ENCODE measurements at regions of chr5 and their contacts with region 1.

Region 1: DNA sequence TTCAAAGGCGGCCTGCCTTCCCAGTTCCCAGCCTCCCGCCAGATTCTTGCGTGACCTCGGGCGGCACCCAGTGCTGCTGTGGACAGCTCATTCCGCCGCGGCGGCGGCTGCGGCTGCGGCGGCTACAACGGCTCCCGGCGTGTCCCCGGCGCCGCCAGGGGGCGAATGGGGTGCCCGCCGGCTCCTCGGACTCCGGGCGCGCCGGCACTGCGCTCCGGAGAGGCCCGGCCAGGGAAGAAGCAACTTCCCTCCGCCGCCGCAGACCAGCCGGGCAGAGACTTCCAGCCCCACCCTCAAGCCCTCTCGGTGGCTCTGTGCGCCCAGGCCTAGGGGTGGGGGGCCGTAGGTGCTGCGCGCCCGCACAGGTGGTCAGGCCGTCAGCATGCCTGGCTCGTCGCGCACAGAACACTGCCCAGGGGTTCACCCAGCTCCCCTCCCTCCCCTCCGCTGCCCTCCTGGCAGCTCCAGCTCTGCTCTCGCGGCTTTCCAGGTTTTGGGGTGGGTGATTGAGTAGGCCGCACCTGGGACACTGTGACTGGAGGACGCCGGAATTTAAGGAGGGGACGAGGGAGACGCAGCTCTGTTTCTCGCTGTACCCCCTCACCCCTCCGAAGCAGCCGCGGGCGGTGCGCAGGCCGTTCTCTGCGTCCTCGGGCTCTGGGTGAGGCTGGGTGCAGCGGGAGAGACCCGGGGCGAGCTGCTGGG is 20.2 kb downstream of the IGIP start:
- DNase-seq: peak; percentile 51 to 68
- ATAC-seq: peak; percentile 89 to 92
- H3K4me3 ChIP-seq: peak overlapping the region; percentile 31
- H3K27ac ChIP-seq: peak overlapping the region in 1 of 2 experiments; percentile 48; a peak in 2 of 6 replicates
- H3K4me1 ChIP-seq: peaks cover 5% of the 10 kb centered on the region; the same call in 2 of the 3 replicates
- CTCF ChIP-seq: peak; percentile 52
- EP300 ChIP-seq: no peak
- POLR2A ChIP-seq: no peak
- RAD21 ChIP-seq: peak in 1 of 2 experiments; percentile 5; a peak in 2 of 5 replicates

Region 2: GRCh38 chr5:139774980-139775661 is 370.8 kb before region 1 on chr5:
- CTCF ChIA-PET with region 1: no interaction called
- POLR2A ChIA-PET with region 1: no interaction called
- DNase-seq: peak; percentile 63 to 83
- ATAC-seq: peak; percentile 90 to 98
- H3K4me3 ChIP-seq: no peak overlapping the region
- H3K27ac ChIP-seq: no peak overlapping the region
- H3K4me1 ChIP-seq: no peaks in the 10 kb centered on the region
- CTCF ChIP-seq: peak; percentile 71
- EP300 ChIP-seq: no peak
- POLR2A ChIP-seq: no peak
- RAD21 ChIP-seq: peak; percentile 44 to 45; a peak in 3 of 5 replicates

Region 3: GRCh38 chr5:139946006-139946405 is 200.0 kb before region 1 on chr5:
- CTCF ChIA-PET with region 1: no interaction called
- POLR2A ChIA-PET with region 1: no interaction called
- DNase-seq: no peak
- ATAC-seq: no peak
- H3K4me3 ChIP-seq: no peak overlapping the region
- H3K27ac ChIP-seq: no peak overlapping the region
- H3K4me1 ChIP-seq: no peaks in the 10 kb centered on the region
- CTCF ChIP-seq: no peak
- EP300 ChIP-seq: no peak
- POLR2A ChIP-seq: no peak
- RAD21 ChIP-seq: no peak

Region 4: GRCh38 chr5:140054086-140054689 is 91.8 kb before region 1 on chr5:
- CTCF ChIA-PET with region 1: interaction called, 13 read pairs
- POLR2A ChIA-PET with region 1: no interaction called
- DNase-seq: no peak
- ATAC-seq: no peak
- H3K4me3 ChIP-seq: no peak overlapping the region
- H3K27ac ChIP-seq: no peak overlapping the region
- H3K4me1 ChIP-seq: no peaks in the 10 kb centered on the region
- CTCF ChIP-seq: no peak
- EP300 ChIP-seq: no peak
- POLR2A ChIP-seq: no peak
- RAD21 ChIP-seq: no peak

Region 5: GRCh38 chr5:140094889-140095288 is 51.1 kb before region 1 on chr5:
- CTCF ChIA-PET with region 1: interaction called, 11 read pairs
- POLR2A ChIA-PET with region 1: no interaction called
- DNase-seq: no peak
- ATAC-seq: no peak
- H3K4me3 ChIP-seq: no peak overlapping the region
- H3K27ac ChIP-seq: no peak overlapping the region
- H3K4me1 ChIP-seq: no peaks in the 10 kb centered on the region
- CTCF ChIP-seq: no peak
- EP300 ChIP-seq: no peak
- POLR2A ChIP-seq: no peak
- RAD21 ChIP-seq: no peak

Region 6: GRCh38 chr5:140113699-140114263 is 32.2 kb before region 1 on chr5 and contains the start of gene PURA:
- CTCF ChIA-PET with region 1: interaction called, 125 read pairs
- POLR2A ChIA-PET with region 1: interaction called, 5 read pairs
- DNase-seq: peak; percentile 92 to 94
- ATAC-seq: peak; percentile 91 to 93
- H3K4me3 ChIP-seq: peak within 1 kb of the TSS; percentile 68
- H3K27ac ChIP-seq: peak within 1 kb of the TSS; percentile 92 to 96
- H3K4me1 ChIP-seq: peaks cover 48% of the 10 kb centered on the region
- CTCF ChIP-seq: peak; percentile 24; the same call in 2 of the 3 replicates
- EP300 ChIP-seq: no peak
- POLR2A ChIP-seq: peak; percentile 85
- RAD21 ChIP-seq: 0 out of 5 replicates have a peak, but pooled peaks of 1 of the 2 experiments have one; percentile 19
- polyA plus RNA-seq, gene PURA: 3.4 and 4.5 TPM in 2 replicates

Region 7: DNA sequence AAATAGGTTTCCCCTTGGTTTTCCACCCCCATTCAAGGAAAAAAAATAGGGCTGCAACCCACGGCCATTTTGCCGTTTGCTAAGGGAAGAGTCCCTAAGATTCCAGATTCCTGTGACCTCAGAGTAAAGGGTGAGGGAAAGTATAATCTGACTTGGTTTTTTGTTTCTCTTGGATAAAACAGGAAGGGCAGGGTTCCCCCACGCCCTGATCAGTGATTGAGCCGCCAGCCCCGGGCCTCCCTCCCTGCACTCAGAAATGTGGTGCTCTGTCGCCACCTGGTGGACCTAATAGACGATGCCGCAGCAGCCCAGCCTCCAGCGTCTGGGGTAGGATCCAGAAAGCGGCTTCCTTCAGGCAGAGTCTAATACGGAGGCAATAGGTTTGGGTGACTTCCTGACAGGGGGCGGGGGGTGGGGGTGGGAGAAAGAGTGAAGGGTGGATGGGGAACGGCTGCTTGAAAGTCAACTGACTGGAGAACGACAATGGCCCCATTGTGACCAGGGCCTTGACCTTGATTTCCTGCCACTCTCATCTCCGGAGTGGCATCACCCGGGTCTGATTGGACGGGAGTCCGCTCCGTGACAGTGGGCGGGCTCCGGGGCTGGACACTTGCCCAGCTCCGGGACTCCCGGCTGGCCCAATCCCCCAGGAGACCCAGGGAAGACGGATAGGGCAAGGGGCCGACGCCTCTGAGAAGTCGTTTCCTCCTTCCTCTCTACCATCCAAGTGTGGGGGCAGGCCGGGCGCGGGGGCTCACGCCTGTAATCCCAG is 11.2 kb after region 1 on chr5:
- CTCF ChIA-PET with region 1: interaction called, 143 read pairs
- POLR2A ChIA-PET with region 1: no interaction called
- DNase-seq: peak; percentile 80 to 95
- ATAC-seq: peak; percentile 94 to 97
- H3K4me3 ChIP-seq: peak overlapping the region; percentile 36
- H3K27ac ChIP-seq: peak overlapping the region; percentile 60 to 87
- H3K4me1 ChIP-seq: peaks cover 4% of the 10 kb centered on the region; the same call in 1 of the 3 replicates
- CTCF ChIP-seq: peak; percentile 96
- EP300 ChIP-seq: no peak
- POLR2A ChIP-seq: no peak
- RAD21 ChIP-seq: peak; percentile 96

Region 8: DNA sequence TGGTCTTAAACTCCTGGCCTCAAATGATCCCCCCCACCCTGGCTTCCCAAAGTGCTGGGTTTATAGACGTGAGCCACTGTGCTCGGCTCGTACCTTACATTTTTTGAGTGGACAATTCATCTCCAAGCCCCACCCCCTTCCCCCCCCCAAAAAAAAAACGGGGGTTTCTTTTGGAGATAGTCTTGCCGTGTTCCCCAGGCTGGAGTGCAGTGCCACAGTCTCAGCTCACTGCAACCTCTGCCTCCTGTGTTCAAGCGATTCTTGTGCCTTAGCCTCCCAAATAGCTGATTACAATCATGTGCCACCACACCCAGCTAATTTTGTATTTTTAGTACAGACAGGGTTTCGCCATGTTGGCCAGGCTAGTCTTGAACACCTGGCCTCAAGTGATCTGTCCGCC is 286.9 kb after region 1 on chr5:
- CTCF ChIA-PET with region 1: no interaction called
- POLR2A ChIA-PET with region 1: no interaction called
- DNase-seq: no peak
- ATAC-seq: no peak
- H3K4me3 ChIP-seq: no peak overlapping the region
- H3K27ac ChIP-seq: no peak overlapping the region
- H3K4me1 ChIP-seq: no peaks in the 10 kb centered on the region
- CTCF ChIP-seq: no peak
- EP300 ChIP-seq: no peak
- POLR2A ChIP-seq: no peak
- RAD21 ChIP-seq: no peak

Measured in A549 (cell line).